Lower leg skin (tissue), 4 donors: ENCODE measurements at regions of chr2 and their contacts with region 1.

Region 1: DNA sequence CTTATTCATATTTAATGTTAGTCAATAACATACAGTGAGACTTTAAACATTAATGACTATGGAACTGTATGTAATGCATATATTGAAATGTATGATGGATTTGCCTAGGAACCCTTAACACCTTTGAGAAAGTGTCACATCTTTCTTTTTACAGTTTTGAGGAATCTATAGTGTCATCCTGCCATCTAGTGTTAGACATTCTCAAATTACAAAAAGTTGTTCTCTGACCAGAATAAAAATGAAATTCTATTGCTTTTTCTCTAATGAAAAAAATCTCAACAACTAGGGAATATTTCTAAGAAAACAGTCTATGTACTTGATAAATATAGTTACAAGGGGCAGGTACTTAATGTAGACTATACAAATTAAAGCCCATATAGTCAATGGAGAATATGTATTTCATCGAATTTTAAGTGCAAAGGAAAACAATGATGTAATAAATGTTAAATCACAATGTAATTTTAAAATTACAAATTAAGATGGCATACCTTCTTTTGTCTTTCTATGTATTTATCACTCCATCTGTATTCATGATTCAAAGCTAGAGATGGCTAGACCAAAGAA is 5.1 kb upstream of the CALCRL start:
- DNase-seq: no peak
- H3K4me3 ChIP-seq: no peak overlapping the region
- CTCF ChIP-seq: no peak
- POLR2A ChIP-seq: no peak

Region 2: GRCh38 chr2:185952098-185952497 is 1501.1 kb before region 1 on chr2:
- intact Hi-C with region 1: no loop called
- DNase-seq: no peak
- H3K4me3 ChIP-seq: no peak overlapping the region
- CTCF ChIP-seq: no peak
- POLR2A ChIP-seq: no peak

Region 3: GRCh38 chr2:186868344-186868743 is 584.8 kb before region 1 on chr2:
- intact Hi-C with region 1: loop called (anchors 5 kb)
- DNase-seq: no peak
- H3K4me3 ChIP-seq: no peak overlapping the region
- CTCF ChIP-seq: no peak
- POLR2A ChIP-seq: no peak

Region 4: DNA sequence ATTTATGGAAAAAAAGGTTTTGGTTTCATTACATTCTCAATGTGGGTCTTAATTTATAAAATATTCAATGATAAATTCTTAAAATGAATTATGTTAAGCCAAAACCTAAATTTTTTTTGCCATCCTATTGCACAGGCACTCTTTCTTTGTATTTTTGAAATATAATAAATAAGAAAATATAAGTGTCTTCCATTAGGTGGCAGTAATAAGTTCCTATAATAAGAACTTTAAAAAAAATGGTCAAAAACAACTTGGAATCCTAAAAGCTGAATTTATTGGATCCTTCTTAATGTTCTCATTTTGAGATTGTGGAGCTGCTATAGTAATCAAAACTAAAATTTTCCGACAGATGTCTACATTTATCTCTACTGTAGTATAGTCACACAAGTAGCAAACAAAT is 10.8 kb before region 1 on chr2:
- intact Hi-C with region 1: no loop called
- DNase-seq: no peak
- H3K4me3 ChIP-seq: no peak overlapping the region
- CTCF ChIP-seq: no peak
- POLR2A ChIP-seq: no peak

Region 5: GRCh38 chr2:187640926-187641510 is 187.9 kb after region 1 on chr2:
- intact Hi-C with region 1: no loop called
- DNase-seq: no peak
- H3K4me3 ChIP-seq: no peak overlapping the region
- CTCF ChIP-seq: no peak
- POLR2A ChIP-seq: no peak